PC-9 (cell line): ENCODE measurements at regions of chr10 and their contacts with region 1.

Region 1: DNA sequence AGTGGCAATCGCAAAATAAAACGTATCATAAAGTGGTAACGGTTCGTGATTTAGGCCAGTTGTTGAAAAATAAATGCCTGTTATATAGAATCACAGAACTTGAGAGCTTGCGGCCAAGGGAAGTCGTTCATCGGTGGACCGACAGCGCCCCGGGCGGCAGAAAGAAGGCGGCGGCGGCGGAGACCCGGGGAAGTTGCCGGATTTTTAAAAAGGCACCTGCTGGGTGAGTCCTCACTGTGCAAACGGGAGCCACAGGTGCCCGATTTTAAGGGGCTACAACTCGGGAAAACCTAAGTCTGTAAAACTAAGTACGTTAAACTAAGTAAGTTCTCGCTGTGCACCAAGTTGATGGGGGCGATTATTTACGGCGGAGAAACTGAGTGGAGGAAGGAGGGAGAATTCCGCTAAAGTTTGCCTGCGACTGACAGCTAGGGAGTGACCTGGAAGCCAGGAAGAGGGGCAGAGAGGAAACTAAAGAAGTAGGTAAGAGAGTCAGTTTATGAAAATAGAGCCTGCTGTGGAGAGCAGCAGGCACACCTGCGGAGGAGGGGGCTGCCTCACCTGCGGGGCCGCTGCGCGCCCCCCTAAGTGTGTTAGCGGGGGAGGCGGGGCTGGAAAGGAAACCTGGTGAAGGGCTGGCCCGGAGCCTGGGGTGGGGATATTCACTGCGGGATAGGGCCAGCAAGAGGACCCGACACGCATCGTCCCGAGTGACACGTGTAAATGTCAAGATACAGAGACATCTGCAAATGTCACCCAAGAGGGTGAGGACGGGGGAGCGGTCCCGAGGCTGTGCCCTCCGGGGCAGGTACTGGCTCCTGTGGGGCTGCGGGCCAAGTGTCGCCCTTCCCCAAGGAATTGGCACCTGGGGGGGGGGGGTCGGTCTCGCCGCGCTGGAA is 1.0 kb downstream of the ADAM12 start:
- DNase-seq: peak; percentile 50 to 79
- H3K4me3 ChIP-seq: peak overlapping the region; percentile 78
- H3K27ac ChIP-seq: peak overlapping the region; percentile 28; the same call in 1 of the 2 replicates
- H3K4me1 ChIP-seq: peaks cover 8% of the 10 kb centered on the region; the same call in 1 of the 2 replicates
- H3K27me3 ChIP-seq: no peaks in the 10 kb centered on the region
- CTCF ChIP-seq: peak; percentile 79

Region 2: DNA sequence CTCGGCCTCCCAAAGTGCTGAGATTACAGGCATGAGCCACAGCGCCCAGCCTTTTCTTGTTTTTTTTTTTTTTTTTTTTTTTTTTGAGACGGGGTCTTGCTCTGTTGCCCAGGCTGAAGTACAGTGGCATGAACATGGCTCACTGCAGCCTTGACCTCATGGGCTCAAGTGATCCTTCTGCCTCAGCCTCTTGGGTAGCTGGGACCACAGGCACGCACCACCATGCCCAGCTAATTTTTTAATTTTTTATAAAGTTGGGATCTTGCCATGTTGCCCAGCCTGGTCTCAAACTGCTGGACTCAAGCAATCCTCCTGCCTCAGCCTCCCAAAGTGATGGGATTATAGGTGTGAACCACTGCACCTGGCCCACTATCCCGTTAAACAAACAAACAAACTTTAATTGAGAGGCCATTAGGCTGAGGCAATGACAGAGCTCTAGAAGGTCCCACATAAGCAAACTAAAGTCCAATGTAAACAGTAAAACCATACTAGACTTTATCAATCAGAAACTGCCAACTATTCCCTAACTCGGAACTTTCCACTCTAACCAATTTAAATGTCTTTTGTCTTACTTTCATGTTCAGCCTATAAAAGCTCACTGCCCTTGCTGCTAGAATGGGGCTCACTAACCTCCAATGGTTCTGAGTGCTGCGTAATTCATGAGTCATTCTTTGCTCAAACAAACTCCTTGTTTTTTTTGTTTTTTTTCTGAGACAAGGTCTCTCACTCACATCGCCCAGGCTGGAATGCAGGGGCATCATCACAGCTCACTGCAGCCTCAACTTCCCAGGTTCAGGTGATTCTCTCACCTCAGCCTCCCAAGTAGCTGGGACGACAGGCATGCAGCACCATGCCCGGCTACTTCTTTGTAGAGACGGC is 508.1 kb before region 1 on chr10:
- CTCF ChIA-PET with region 1: no interaction called
- POLR2A ChIA-PET with region 1: no interaction called
- intact Hi-C with region 1: loop called (anchors 5 kb)
- DNase-seq: peak; percentile 53 to 89
- H3K4me3 ChIP-seq: no peak overlapping the region
- H3K27ac ChIP-seq: peak overlapping the region; percentile 76
- H3K4me1 ChIP-seq: peaks cover 12% of the 10 kb centered on the region
- H3K27me3 ChIP-seq: no peaks in the 10 kb centered on the region
- CTCF ChIP-seq: no peak

Region 3: DNA sequence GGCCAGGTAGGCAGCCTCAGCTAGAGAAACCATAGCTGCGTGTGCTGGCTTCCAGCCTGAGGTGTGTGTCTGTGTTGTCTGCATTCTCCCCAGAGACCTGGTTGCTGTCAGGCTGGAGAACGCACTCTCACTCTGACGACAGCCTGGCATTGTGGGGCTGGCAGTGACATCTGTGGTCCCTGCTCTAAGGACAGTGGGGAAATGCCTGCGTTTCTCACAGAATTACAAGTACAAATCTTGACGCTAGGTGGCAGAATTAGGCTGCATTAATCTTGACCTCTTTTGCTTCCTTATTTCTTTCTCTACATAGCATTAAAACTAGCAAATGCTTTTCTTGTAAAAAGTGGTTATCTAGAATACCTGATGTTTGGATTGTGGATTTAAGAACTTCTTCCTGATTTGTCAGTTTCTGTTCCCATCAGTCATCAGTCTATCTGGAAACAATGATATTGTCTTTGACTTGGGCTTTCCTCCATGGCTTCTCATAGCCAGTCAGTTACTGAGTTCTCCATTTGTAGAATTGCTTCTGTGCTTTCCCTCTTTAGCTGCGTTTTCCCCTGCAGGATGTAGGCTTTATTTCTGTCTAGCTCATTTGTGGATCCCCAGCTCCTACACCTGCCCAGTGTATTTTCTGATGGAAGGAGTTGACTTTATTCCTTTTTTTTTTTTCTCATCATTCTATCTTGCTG is 404.9 kb before region 1 on chr10:
- CTCF ChIA-PET with region 1: no interaction called
- POLR2A ChIA-PET with region 1: no interaction called
- intact Hi-C with region 1: loop called (anchors 1 kb)
- DNase-seq: peak; percentile 18 to 47
- H3K4me3 ChIP-seq: no peak overlapping the region
- H3K27ac ChIP-seq: no peak overlapping the region
- H3K4me1 ChIP-seq: no peaks in the 10 kb centered on the region
- H3K27me3 ChIP-seq: no peaks in the 10 kb centered on the region
- CTCF ChIP-seq: peak; percentile 72

Region 4: DNA sequence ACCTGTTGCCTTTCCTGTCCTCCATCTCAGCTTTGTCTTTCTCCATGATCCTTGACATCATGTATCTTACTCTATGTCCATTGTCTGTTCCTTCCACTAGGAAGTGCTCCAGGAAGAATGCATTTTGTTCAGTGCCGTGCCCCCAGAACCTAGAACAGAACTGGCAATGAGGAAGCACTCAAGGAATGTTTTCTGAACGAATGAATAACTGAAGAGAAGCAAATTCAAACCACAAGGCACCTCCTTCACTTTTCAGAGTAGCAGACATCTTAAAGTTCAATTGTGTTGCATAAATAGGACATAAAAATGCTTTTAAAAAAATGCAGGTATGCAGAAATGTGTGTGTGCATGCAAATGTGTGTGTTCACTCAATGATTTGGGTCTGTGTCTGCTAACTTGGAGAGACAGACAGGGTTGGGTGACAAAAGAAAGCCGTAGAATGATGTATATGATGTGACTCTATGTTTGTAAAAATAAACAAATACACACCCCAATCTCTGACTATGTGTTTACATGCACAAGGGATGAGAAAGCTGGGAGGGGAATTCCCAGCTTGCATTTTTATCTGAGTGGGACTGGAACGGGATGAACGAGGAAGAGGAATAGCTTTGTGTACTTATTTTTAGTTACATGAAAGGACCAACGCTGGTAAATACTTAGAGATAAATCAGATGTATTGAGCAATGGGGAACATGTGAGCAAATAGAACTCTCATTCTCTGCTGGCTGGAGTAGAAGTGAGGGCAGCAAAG is 253.2 kb before region 1 on chr10:
- CTCF ChIA-PET with region 1: no interaction called
- POLR2A ChIA-PET with region 1: no interaction called
- intact Hi-C with region 1: loop called (anchors 5 kb)
- DNase-seq: peak; percentile 12 to 69
- H3K4me3 ChIP-seq: no peak overlapping the region
- H3K27ac ChIP-seq: peak overlapping the region; percentile 33; the same call in 1 of the 2 replicates
- H3K4me1 ChIP-seq: peaks cover 17% of the 10 kb centered on the region
- H3K27me3 ChIP-seq: no peaks in the 10 kb centered on the region
- CTCF ChIP-seq: no peak

Region 5: DNA sequence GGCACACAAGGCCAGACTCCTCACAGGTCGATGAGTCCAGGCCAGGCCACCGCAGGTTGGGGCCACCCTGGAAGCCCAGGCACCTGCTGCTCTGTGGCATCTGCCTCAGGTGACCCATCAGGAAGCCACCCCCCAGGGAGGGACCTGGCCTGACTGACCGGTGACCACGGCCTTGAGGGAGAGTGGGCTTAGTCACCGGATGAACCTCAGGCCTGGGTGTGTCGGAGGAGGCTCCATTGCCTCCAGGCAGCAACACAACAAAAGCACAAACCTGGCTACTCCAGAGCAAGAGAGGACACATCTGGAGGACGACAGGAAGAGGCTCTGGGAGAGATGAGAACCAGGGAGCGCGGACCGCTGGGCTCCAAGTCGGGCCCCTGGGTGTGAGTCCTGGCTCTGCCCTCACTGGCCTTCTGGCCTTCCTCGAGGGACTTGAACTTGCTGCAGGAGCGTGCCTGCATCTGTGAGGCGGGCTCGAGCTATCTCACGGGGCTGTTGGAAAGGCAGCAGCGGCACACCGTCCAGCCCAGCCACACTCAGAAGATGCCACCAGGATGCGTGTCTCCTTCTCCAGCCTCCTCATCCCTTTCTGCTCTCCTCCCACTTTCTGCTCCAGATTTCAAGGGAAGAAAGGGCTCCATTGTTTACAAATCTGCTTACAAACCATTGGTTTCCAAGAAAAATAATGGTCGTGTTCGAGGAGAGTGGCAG is 152.0 kb before region 1 on chr10:
- CTCF ChIA-PET with region 1: no interaction called
- POLR2A ChIA-PET with region 1: no interaction called
- intact Hi-C with region 1: loop called (anchors 5 kb)
- DNase-seq: peak; percentile 65 to 80
- H3K4me3 ChIP-seq: no peak overlapping the region
- H3K27ac ChIP-seq: no peak overlapping the region
- H3K4me1 ChIP-seq: peaks cover 14% of the 10 kb centered on the region
- H3K27me3 ChIP-seq: no peaks in the 10 kb centered on the region
- CTCF ChIP-seq: no peak

Region 6: GRCh38 chr10:126459878-126460481 is 72.7 kb after region 1 on chr10:
- CTCF ChIA-PET with region 1: no interaction called
- POLR2A ChIA-PET with region 1: interaction called, 13 read pairs
- intact Hi-C with region 1: loop called (anchors 2 kb)
- DNase-seq: peak; percentile 74 to 98
- H3K4me3 ChIP-seq: no peak overlapping the region
- H3K27ac ChIP-seq: peak overlapping the region; percentile 77
- H3K4me1 ChIP-seq: peaks cover 32% of the 10 kb centered on the region
- H3K27me3 ChIP-seq: no peaks in the 10 kb centered on the region
- CTCF ChIP-seq: no peak

Region 7: GRCh38 chr10:126749015-126749655 is 361.9 kb after region 1 on chr10:
- CTCF ChIA-PET with region 1: no interaction called
- POLR2A ChIA-PET with region 1: no interaction called
- intact Hi-C with region 1: loop called (anchors 1 kb)
- DNase-seq: peak; percentile 40 to 63
- H3K4me3 ChIP-seq: no peak overlapping the region
- H3K27ac ChIP-seq: no peak overlapping the region
- H3K4me1 ChIP-seq: no peaks in the 10 kb centered on the region
- H3K27me3 ChIP-seq: no peaks in the 10 kb centered on the region
- CTCF ChIP-seq: peak; percentile 58